ENCODE measurements at regions of chr2 and their contacts with region 1.

Region 1: GRCh38 chr2:26284136-26284535 is 39.4 kb downstream of the HADHB start:
- DNase-seq: no peak
- ATAC-seq: no peak
- H3K4me3 ChIP-seq: no peak overlapping the region
- H3K27ac ChIP-seq: no peak overlapping the region
- H3K4me1 ChIP-seq: no peaks in the 10 kb centered on the region
- H3K27me3 ChIP-seq: no peaks in the 10 kb centered on the region
- CTCF ChIP-seq: no peak
- POLR2A ChIP-seq: no peak

Region 2: DNA sequence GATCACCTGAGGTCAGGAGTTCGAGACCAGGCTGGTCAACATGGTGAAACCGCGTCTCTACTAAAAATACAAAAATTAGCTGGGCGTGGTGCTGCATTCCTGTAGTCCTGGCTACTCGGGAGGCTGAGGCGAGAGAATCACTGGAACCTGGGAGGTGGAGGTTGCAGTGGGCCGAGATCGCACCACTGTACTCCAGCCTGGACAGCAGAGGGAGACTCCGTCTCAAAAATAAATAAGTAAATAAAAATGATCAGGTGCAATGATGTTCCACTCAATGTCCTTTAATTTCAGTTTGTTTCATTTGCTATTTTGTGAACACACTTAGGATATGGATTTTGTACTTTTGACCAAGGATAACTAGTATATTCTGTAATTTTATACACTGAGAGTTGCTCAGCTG is 49.1 kb before region 1 on chr2:
- intact Hi-C with region 1: loop called (anchors 10 kb)
- DNase-seq: peak in 2 of 4 donors; percentile 16 to 29
- ATAC-seq: no peak
- H3K4me3 ChIP-seq: no peak overlapping the region
- H3K27ac ChIP-seq: no peak overlapping the region
- H3K4me1 ChIP-seq: peaks cover 24% of the 10 kb centered on the region
- H3K27me3 ChIP-seq: no peaks in the 10 kb centered on the region
- CTCF ChIP-seq: peak in 5 of 7 experiments; percentile 23 to 55 (median 46)
- POLR2A ChIP-seq: no peak

Region 3: DNA sequence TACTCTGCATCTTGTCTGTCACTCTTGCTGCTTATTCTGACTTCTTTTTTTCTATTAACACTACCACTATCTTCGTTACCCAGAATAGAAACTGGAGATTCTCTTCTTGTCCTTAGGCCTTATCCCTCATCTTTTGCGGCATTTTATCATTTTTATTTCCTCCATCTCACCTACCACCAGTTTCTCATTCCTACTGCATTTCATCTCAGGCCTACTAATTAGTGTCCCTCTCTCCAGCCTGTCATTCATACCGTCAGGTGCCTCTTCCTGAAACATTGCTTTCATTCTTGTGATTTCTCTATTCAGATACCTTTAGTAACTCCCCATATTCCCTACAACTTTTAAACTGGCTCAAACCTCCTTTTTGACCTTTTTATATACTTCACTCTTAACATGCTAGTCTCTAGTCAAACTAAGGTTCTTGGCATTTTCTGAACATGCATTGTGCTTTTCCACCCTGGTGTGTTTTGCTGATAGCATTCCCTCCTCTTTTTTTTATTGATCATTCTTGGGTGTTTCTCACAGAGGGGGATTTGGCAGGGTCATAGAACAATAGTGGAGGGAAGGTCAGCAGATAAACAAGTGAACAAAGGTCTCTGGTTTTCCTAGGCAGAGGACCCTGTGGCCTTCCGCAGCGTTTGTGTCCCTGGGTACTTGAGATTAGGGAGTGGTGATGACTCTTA is 85.4 kb after region 1 on chr2:
- intact Hi-C with region 1: no loop called
- DNase-seq: no peak
- ATAC-seq: no peak
- H3K4me3 ChIP-seq: no peak overlapping the region
- H3K27ac ChIP-seq: no peak overlapping the region
- H3K4me1 ChIP-seq: no peaks in the 10 kb centered on the region
- H3K27me3 ChIP-seq: no peaks in the 10 kb centered on the region
- CTCF ChIP-seq: no peak
- POLR2A ChIP-seq: no peak

Region 4: DNA sequence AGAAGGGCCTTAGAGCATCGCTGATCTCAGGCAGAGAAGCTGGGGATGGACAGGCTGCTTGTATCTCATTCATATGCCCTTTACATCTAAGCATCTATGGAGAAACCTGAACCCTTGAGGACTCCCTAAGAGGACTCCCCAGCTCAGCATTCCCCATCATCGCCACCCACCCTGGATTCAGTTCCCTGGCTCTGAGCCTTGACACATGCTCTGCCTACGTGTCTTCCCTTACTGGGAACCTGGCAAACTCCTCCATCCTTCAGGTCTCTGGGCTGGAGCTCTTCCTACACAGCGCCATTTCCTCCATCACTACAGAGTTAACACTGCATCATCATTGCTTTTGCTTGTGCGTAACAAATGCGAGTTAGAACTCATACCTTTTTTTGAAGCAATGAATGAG is 225.0 kb after region 1 on chr2:
- intact Hi-C with region 1: no loop called
- DNase-seq: no peak
- ATAC-seq: no peak
- H3K4me3 ChIP-seq: no peak overlapping the region
- H3K27ac ChIP-seq: no peak overlapping the region
- H3K4me1 ChIP-seq: no peaks in the 10 kb centered on the region
- H3K27me3 ChIP-seq: no peaks in the 10 kb centered on the region
- CTCF ChIP-seq: no peak
- POLR2A ChIP-seq: no peak

Measured in body of pancreas (tissue), 4 donors.